ENCODE measurements at regions of chr1 and their contacts with region 1.

Region 1: DNA sequence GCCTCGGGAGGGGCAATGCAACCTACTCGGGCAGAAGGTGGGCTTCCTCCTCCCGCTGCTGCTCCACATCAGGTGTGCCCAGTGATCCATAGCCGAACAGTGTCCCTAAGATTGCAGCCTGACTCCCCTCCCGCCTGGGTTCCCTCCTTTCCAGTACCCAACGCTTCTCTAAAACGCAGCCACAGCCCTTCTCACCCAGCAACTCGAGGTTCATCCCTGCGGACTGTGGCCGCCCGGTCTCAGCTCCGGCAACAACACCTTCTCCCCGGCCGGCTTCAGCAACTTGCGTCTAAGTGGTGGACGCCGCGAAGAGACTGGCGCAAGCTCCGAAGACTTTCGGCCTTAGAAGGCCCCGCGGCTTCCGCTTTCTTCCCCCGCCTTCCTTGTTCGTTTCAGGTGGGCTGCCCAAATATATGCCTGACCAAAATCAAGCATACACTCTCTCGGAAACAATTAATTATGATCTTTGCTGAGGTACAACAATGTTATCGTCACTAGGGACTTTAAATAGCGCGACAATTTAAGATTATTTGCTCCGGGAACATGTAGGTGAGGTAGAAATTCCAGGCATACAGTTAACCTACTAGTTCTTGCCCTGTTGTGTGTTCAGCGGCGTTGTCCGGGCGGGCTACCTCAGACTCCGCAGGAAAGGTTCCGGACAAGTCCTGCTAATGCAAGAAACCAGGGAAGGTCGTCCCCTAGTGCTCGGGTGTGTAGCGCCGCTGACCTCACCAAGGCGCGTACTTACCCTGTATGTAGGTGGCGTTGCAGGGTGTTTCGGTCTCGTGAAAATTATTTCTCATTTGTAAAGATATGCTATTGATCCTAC is at the start of gene RBBP5:
- DNase-seq: peak; percentile 96
- H3K4me3 Mint-ChIP-seq: peak within 1 kb of the TSS; percentile 91
- H3K27ac Mint-ChIP-seq: peak within 1 kb of the TSS; percentile 94
- H3K4me1 Mint-ChIP-seq: peaks cover 38% of the 10 kb centered on the region
- H3K27me3 Mint-ChIP-seq: no peaks in the 10 kb centered on the region
- total RNA-seq, gene RBBP5: 19.5 to 20.3 TPM

Region 2: DNA sequence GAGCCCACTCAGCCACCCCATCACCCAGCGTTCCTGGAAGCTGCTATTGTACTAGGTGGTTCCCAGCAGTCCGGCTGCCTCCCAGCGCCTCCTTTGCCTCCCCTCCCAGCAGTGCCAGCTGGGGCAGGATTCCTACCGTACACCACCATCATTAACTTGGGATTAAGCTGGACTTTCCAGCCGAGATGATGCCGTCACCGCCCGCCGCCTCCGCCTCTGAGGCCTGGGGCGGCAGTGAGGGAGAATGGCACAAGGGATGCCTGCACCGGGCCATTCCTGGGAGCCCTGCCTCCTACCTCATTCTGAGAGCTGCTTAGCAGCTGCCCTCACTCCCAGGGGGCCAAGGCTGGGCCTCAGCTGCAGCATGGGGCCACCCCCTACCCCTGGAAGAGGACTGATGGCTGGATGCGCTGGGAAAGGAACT is 65.7 kb before region 1 on chr1:
- CTCF ChIA-PET with region 1: no interaction called
- POLR2A ChIA-PET with region 1: no interaction called
- DNase-seq: no peak
- H3K4me3 Mint-ChIP-seq: no peak overlapping the region
- H3K27ac Mint-ChIP-seq: no peak overlapping the region
- H3K4me1 Mint-ChIP-seq: no peaks in the 10 kb centered on the region
- H3K27me3 Mint-ChIP-seq: no peaks in the 10 kb centered on the region

Region 3: GRCh38 chr1:205108464-205108863 is 13.4 kb before region 1 on chr1:
- CTCF ChIA-PET with region 1: interaction called, 10 read pairs
- POLR2A ChIA-PET with region 1: interaction called, 5 read pairs
- DNase-seq: no peak
- H3K4me3 Mint-ChIP-seq: no peak overlapping the region
- H3K27ac Mint-ChIP-seq: no peak overlapping the region
- H3K4me1 Mint-ChIP-seq: peaks cover 6% of the 10 kb centered on the region
- H3K27me3 Mint-ChIP-seq: no peaks in the 10 kb centered on the region

Region 4: DNA sequence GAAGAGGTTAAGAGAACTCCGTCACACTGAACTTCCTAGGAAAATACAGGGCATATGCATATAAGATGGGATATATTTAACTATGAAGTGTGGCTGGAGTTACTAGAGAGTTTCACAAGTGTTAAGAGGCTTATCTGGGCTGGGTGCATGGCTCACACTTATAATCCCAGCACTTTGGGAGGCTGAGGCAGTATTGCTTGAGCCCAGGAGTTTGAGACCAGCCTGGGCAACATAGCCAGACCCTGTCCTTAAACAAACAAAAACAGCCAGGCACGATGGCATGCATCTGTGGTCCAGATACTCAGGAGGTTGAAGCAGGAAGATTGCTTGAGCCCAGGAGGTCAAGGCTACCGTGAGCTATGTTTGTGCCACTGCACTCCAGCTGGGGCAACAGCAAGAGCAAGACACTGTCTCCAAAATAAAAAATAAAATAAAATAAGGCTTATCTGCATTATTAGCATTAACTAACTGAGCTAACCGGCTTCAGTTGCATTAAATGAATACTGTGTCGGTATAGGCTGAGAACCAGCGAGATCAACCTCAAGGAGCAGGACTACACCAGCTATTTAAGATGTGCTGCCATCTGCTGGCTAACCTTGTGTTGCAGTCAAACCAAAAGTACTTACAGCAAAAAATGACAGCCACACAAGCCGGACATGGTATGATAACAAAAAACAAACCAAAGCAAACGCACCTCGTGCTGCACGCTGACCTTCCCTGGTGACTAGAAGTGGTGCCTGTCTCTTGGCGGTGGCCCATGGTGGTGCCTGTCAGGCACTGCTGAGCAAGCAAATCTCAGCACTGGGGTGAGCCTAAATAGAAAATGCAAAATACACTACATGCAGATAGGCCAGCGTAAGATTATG is 19.6 kb after region 1 on chr1:
- CTCF ChIA-PET with region 1: interaction called, 27 read pairs
- POLR2A ChIA-PET with region 1: interaction called, 9 read pairs
- DNase-seq: peak; percentile 80
- H3K4me3 Mint-ChIP-seq: no peak overlapping the region
- H3K27ac Mint-ChIP-seq: no peak overlapping the region
- H3K4me1 Mint-ChIP-seq: peaks cover 4% of the 10 kb centered on the region
- H3K27me3 Mint-ChIP-seq: no peaks in the 10 kb centered on the region

Region 5: DNA sequence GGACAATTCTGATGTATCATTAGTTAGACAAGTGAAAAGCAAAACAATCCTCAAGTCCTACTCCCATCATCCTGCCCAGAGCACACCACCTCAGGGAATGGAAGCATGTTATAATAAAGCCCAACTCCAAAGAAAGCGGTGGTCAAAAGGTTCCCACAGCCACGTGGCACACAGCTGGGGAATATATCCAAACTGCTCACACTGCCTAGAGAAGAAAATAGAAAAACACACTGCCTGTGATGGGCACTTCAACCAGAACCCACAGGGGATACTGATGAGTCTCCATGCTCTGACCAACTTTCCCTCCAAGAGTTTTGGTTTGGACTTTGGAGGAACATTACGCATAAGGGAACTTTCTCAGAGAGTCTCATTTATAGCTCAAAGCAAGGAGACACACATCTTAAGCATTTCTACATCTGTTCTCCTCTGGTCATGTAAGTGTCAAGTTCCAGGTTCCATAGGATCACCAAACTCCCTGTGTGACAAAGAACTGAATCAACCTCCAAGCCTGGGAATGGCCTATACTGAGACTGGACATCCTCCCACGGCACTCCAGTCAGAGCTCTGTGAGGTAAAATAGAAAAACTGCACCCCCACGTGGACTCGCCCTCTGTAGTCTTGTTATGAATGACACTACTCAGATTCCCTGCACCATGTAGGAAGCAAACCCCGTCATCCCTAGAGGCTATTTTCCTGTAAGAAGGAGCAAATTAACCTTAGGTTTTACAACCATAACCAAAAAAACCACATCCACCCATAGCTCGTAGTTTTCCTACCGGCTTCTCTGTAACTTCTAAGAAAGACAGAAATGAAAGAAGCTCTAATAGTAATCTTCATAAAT is 77.4 kb after region 1 on chr1:
- CTCF ChIA-PET with region 1: interaction called, 12 read pairs
- POLR2A ChIA-PET with region 1: no interaction called
- DNase-seq: peak; percentile 24
- H3K4me3 Mint-ChIP-seq: peak overlapping the region; percentile 6
- H3K27ac Mint-ChIP-seq: peak overlapping the region; percentile 9
- H3K4me1 Mint-ChIP-seq: peaks cover 38% of the 10 kb centered on the region
- H3K27me3 Mint-ChIP-seq: no peaks in the 10 kb centered on the region

Region 6: GRCh38 chr1:205211169-205211838 is 89.4 kb after region 1 on chr1 and contains the start of gene DSTYK:
- CTCF ChIA-PET with region 1: interaction called, 4 read pairs
- POLR2A ChIA-PET with region 1: interaction called, 10 read pairs
- DNase-seq: peak; percentile 93
- H3K4me3 Mint-ChIP-seq: peak within 1 kb of the TSS; percentile 87
- H3K27ac Mint-ChIP-seq: peak within 1 kb of the TSS; percentile 81
- H3K4me1 Mint-ChIP-seq: peaks cover 41% of the 10 kb centered on the region
- H3K27me3 Mint-ChIP-seq: no peaks in the 10 kb centered on the region
- total RNA-seq, gene DSTYK: 8.8 to 9.2 TPM

Measured in activated CD4-positive, alpha-beta memory T cell treated with anti-CD3 and anti-CD28 coated beads, Interleukin-2, amount 10 ng/mL, durations not matched to agents 7 days and 5 days (primary cell).